Activated T-helper 1 cell treated with anti-CD3 and anti-CD28 coated beads, Interleukin-12 subunit alpha, Interleukin-12 subunit beta, Interleukin-2, Interleukin-4 antibody, amounts not matched to agents 30 ng/mL and 10 ng/mL and 1 ng/mL, durations not matched to agents 14 hours and 24 hours and 36 hours (primary cell): ENCODE measurements at regions of chr12 and their contacts with region 1.

Region 1: GRCh38 chr12:89709157-89709994 is 738 bp upstream of the ATP2B1 start:
- DNase-seq: peak; percentile 97
- H3K4me3 Mint-ChIP-seq: peak overlapping the region; percentile 81
- H3K27ac Mint-ChIP-seq: peak overlapping the region; percentile 91
- H3K4me1 Mint-ChIP-seq: peaks cover 26% of the 10 kb centered on the region
- H3K27me3 Mint-ChIP-seq: peaks cover 31% of the 10 kb centered on the region

Region 2: DNA sequence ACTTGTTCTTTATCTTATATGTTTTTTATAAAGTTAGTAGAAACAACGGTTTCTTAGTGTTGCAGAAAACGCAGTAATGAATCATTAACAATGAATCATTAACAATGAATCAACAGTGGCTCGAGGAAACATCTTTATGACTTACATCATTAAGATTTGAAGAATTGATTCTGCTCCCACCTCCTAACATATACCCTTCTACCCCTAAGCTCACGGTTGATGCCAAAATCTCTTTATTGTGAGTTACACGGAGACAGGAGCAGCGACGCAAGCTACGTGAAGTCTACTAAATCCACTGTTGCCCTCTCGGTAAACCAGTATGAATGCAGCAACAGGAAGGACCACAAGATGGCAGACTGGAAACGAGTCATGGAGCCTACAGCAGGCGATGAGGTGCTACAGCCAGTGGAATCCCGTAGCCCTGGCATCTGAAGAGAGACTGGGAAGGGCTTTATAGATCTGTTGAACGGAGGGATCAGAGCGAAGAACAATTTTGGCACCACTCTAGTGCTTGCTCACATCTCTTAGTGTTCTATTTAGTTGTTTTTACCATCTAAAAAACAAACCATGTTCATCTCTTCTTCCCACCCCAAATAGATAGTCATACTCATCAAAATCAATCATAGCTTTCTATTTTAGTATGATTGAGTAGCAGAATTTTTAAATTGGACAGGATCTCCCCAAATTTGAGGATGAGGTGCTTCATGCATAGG is 689.8 kb before region 1 on chr12:
- intact Hi-C with region 1: loop called (anchors 2 kb)
- DNase-seq: peak; percentile 73
- H3K4me3 Mint-ChIP-seq: no peak overlapping the region
- H3K27ac Mint-ChIP-seq: no peak overlapping the region
- H3K4me1 Mint-ChIP-seq: peaks cover 31% of the 10 kb centered on the region
- H3K27me3 Mint-ChIP-seq: peaks cover 12% of the 10 kb centered on the region

Region 3: GRCh38 chr12:89494411-89495231 is 214.8 kb before region 1 on chr12:
- intact Hi-C with region 1: loop called (anchors 1 kb)
- DNase-seq: peak; percentile 16
- H3K4me3 Mint-ChIP-seq: peak overlapping the region; percentile 50
- H3K27ac Mint-ChIP-seq: peak overlapping the region; percentile 92
- H3K4me1 Mint-ChIP-seq: peaks cover 34% of the 10 kb centered on the region
- H3K27me3 Mint-ChIP-seq: no peaks in the 10 kb centered on the region

Region 4: DNA sequence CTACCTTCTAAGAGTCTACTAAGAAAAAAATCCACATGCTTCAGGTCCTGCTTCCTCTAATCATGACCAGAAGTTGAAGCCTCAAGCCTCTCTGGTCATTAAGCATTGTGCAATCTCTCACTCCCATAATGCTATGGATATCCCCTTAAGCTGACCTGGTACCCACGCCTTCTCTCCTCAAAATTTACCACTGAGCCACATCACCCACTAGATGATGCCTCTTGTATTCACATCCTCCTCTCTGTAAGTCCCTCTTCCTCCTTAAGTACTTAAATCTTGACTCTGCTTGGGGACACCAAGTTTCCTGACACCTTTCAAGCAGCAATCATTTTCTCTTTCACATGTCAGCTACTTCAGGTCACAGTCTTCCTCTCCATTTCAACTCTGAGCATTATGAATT is 194.6 kb before region 1 on chr12:
- intact Hi-C with region 1: no loop called
- DNase-seq: no peak
- H3K4me3 Mint-ChIP-seq: no peak overlapping the region
- H3K27ac Mint-ChIP-seq: no peak overlapping the region
- H3K4me1 Mint-ChIP-seq: peaks cover 20% of the 10 kb centered on the region
- H3K27me3 Mint-ChIP-seq: no peaks in the 10 kb centered on the region

Region 5: GRCh38 chr12:89663577-89664357 is 45.6 kb before region 1 on chr12:
- intact Hi-C with region 1: loop called (anchors 5 kb)
- DNase-seq: no peak
- H3K4me3 Mint-ChIP-seq: no peak overlapping the region
- H3K27ac Mint-ChIP-seq: no peak overlapping the region
- H3K4me1 Mint-ChIP-seq: peaks cover 33% of the 10 kb centered on the region
- H3K27me3 Mint-ChIP-seq: no peaks in the 10 kb centered on the region

Region 6: GRCh38 chr12:89803412-89803811 is 94.0 kb after region 1 on chr12:
- intact Hi-C with region 1: no loop called
- DNase-seq: no peak
- H3K4me3 Mint-ChIP-seq: no peak overlapping the region
- H3K27ac Mint-ChIP-seq: no peak overlapping the region
- H3K4me1 Mint-ChIP-seq: no peaks in the 10 kb centered on the region
- H3K27me3 Mint-ChIP-seq: peaks cover 1% of the 10 kb centered on the region

Region 7: DNA sequence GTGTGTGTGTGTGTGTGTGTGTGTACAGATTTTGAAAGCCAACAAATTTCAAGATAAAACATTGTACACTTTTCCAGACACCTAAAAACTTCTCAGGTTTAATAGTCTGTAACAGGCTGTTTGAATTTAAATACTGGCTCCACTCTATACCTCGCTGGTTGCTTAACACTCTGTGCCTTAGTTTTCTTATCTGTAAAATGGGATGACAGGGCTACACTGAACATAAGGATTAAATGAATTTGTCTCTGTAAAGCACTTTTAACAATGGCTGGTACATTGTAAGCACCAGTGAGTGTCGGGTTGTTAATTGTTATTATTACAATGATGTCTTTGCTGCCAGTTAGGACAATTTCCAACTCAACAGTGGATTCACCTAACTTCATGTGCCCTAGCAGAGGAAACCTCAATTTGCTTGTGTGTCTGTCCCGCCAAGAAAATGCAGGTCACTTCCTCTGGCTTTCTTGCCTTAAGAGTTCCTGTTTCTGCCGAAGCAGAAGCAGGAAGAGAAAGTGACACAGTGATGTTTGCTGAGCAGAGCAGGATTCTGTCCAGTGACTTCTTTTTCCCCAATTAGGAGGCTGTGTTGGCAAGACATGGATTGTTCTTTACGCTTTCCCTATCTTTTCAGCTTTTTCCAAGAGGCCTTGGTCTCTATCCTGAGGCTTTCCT is 153.3 kb after region 1 on chr12:
- intact Hi-C with region 1: loop called (anchors 1 kb)
- DNase-seq: peak; percentile 44
- H3K4me3 Mint-ChIP-seq: peak overlapping the region; percentile 76
- H3K27ac Mint-ChIP-seq: peak overlapping the region; percentile 95
- H3K4me1 Mint-ChIP-seq: peaks cover 60% of the 10 kb centered on the region
- H3K27me3 Mint-ChIP-seq: no peaks in the 10 kb centered on the region

Region 8: DNA sequence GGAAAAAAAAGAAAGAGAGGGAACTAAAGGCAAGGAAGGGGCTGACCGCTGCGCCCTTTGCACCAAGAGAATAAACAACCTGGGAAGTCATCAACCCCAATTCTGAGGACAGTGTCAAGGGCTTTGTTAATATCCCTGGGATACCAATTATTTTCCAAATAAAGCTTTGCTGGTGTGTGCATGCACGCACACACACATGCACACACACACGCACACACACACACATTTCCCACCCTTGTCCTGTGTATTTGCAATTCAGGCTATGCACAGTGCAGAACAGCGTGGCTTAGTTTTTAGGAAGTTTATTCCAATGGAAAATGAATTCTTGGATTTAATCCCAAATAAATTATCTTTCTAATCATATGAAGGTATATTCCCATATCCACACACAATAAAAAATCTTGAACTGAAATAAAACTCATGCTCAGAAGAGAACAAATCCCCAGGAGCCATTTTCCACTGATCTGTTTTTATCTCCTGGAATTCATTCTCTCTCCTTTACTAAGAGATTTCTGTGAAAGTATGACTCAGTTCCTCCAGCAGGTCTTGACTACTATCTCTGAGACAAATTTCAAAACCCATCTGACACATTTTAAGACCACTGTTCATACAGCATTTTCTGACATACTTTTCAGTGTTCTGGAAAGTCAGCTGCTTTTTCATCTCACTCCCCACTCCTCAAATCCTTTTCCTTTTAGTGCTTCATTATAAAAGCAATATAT is 333.7 kb after region 1 on chr12:
- intact Hi-C with region 1: loop called (anchors 1 kb)
- DNase-seq: no peak
- H3K4me3 Mint-ChIP-seq: no peak overlapping the region
- H3K27ac Mint-ChIP-seq: no peak overlapping the region
- H3K4me1 Mint-ChIP-seq: peaks cover 17% of the 10 kb centered on the region
- H3K27me3 Mint-ChIP-seq: peaks cover 1% of the 10 kb centered on the region

Region 9: DNA sequence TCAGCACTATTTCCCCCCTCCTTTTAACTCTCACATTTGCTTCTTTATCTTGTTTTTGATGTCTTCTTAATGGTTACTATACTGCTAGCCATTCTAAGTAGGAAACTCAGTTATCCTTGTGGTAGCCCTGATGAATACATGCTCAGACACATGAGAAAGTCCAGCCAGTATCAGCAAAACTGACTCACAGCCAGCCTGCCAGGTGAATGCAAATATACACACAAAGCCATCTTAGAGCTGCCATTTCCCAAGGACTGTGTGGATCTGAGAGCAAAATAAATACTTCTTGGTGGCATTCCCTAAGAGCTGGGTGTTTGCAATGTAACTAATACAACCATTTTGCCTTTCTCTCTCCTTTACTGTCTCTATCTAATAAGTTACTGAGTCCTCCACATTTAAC is 790.4 kb after region 1 on chr12:
- intact Hi-C with region 1: no loop called
- DNase-seq: no peak
- H3K4me3 Mint-ChIP-seq: no peak overlapping the region
- H3K27ac Mint-ChIP-seq: no peak overlapping the region
- H3K4me1 Mint-ChIP-seq: no peaks in the 10 kb centered on the region
- H3K27me3 Mint-ChIP-seq: no peaks in the 10 kb centered on the region